Lower leg skin (tissue), 4 donors: ENCODE measurements at regions of chr3 and their contacts with region 1.

Region 1: GRCh38 chr3:49539659-49540560 is 14.4 kb upstream of the BSN start:
- DNase-seq: peak; percentile 88 to 98
- H3K4me3 ChIP-seq: no peak overlapping the region
- CTCF ChIP-seq: peak in 1 of 3 donors; percentile 37
- POLR2A ChIP-seq: no peak

Region 2: DNA sequence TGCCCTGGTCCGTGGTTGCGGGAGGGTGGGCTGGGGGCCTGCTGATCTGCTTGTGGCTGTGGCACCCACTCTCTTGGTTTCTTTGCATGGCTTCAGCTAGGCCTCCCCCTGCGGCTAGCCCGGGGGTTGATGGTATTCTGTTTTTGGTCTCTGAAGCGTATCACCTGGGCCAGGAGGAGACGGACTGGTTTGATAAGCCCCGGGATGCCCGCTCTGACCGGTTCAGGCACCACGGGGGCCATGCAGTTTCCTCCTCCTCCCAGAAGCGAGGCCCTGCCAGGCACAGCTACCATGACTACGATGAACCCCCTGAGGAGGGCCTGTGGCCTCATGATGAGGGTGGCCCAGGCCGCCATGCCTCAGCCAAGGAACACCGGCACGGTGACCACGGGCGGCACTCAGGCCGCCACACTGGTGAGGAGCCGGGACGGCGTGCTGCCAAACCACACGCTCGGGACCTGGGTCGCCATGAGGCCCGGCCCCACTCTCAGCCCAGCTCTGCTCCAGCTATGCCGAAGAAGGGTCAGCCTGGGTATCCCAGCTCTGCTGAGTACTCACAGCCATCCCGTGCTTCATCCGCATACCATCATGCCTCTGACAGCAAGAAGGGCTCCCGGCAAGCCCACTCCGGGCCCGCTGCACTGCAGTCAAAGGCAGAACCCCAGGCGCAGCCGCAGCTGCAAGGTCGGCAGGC is 123.0 kb after region 1 on chr3:
- intact Hi-C with region 1: loop called (anchors 2 kb)
- DNase-seq: no peak
- H3K4me3 ChIP-seq: no peak overlapping the region
- CTCF ChIP-seq: no peak
- POLR2A ChIP-seq: no peak

Region 3: DNA sequence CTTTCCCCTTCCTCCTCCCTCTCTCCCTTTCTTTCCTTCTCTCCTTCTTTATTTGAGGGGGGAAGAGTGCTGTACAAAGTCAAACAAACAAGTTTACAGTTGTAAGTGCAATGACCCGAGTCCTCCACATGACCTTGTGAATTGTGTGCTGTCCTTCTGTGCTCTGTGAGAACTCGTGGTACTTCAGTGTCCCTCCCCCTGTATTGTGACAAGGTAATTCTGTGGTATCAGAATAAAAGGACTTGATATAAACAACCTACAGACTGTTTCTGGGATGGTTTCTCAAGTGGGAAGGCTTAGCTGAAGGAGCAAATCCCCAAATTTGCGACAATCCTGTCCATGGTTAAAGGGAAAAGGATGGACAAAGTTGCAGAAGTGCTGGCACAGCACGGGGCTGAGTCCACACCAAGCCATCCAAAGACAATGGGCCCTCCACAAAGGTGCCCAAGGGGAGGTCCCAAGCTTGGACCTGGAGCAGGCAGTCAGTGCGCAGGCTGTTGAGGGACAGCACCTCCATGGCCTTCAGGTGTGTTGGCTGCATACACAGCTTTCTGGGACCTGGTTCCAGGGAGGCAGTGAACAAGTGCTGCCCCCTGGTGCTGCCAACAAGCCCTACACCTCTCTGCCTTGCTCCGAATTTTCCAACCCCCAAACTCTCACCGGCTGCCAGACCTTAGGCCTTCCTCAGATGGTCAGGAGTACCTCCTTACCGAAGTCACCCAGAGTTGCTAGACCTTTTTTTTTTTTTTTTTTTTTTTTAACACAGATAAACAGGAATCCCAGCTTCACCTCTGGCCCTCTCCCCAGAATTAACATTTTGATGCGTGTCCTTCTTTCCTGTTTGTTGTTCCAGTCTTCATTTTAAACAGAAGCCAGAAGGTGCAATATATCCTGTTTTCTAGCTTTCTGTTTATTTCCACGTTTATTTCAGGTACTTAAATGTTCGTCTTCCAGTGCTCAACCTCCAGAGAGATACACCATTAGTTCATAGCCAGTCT is 131.7 kb after region 1 on chr3:
- intact Hi-C with region 1: loop called (anchors 2 kb)
- DNase-seq: peak; percentile 57 to 90
- H3K4me3 ChIP-seq: no peak overlapping the region
- CTCF ChIP-seq: peak in 1 of 3 donors; percentile 45
- POLR2A ChIP-seq: no peak